SK-N-SH (cell line): ENCODE measurements at regions of chr10 and their contacts with region 1.

Region 1: GRCh38 chr10:101214446-101215396 is 14.5 kb downstream of the LBX1 start:
- DNase-seq: peak; percentile 84
- H3K4me3 ChIP-seq: peak overlapping the region; percentile 19 to 67; a peak in 3 of 4 replicates
- H3K27ac ChIP-seq: no peak overlapping the region
- H3K4me1 ChIP-seq: peaks cover 0 to 35% of the 10 kb centered on the region in 2 experiments; a peak in 2 of 4 replicates
- H3K27me3 ChIP-seq: peaks cover 86% of the 10 kb centered on the region
- CTCF ChIP-seq: peak; percentile 93
- EP300 ChIP-seq: no peak
- RAD21 ChIP-seq: peak; percentile 77

Region 2: DNA sequence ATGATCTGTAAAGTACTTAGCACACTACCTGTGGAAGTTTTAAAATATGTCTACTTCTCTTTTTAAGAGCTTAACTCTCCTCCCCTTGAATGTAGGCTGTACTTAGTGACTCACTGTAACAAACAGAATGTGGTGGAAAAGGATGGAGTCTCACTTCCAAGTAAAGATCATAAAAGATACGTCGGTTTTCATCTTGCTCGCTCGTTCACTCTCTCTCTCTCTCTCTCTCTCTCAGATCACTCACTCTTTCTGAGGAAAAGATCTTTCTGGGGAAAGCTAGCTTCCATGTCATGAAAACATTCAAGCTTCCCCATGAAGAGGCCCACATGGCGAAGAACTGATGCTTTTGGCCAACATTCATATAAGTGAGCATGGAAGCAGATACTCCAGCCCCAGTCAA is 990.8 kb before region 1 on chr10:
- CTCF ChIA-PET with region 1: no interaction called
- POLR2A ChIA-PET with region 1: no interaction called
- DNase-seq: no peak
- H3K4me3 ChIP-seq: no peak overlapping the region
- H3K27ac ChIP-seq: no peak overlapping the region
- H3K4me1 ChIP-seq: peaks cover 3 to 5% of the 10 kb centered on the region in 2 experiments; a peak in 2 of 4 replicates
- H3K27me3 ChIP-seq: no peaks in the 10 kb centered on the region
- CTCF ChIP-seq: no peak
- EP300 ChIP-seq: no peak
- RAD21 ChIP-seq: no peak

Region 3: DNA sequence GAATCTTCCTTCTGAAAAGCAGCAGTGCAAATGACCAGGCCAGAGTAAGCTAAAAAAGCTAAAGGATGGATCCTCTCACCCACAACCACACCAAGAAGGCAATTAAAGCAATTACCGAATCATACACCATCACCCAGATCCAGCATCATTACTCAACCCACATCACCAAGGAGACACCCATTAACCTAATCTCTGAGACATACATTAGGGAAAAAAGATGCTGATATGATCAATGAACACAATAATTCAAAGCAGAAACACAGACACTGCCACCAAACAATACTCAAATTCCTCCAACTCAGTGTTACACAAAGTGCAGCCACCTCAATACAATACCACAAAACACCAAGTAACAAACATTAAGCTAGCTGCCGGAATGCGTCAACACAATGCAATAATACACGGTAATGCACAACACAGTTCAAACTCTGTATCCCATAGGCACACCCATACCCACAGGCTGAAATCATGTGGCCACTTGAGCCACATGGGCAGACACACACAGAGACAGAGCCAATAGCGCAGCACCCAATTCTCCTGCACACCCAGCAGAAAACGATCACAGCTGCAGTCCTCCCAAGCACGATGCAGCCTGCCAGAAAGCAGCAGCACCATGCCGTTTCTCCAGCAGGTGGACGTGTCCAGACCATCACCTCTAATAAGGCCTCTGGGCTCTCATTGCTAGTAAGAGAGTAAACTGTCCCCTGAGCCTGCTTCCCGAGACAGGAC is 447.9 kb before region 1 on chr10:
- CTCF ChIA-PET with region 1: no interaction called
- POLR2A ChIA-PET with region 1: no interaction called
- DNase-seq: peak; percentile 76
- H3K4me3 ChIP-seq: no peak overlapping the region
- H3K27ac ChIP-seq: peak overlapping the region in 1 of 2 experiments; percentile 97; a peak in 2 of 4 replicates
- H3K4me1 ChIP-seq: peaks cover 0 to 35% of the 10 kb centered on the region in 2 experiments; a peak in 2 of 4 replicates
- H3K27me3 ChIP-seq: peaks cover 37% of the 10 kb centered on the region
- CTCF ChIP-seq: no peak
- EP300 ChIP-seq: peak in 1 of 2 experiments; percentile 79; a peak in 2 of 4 replicates
- RAD21 ChIP-seq: peak; percentile 49

Region 4: DNA sequence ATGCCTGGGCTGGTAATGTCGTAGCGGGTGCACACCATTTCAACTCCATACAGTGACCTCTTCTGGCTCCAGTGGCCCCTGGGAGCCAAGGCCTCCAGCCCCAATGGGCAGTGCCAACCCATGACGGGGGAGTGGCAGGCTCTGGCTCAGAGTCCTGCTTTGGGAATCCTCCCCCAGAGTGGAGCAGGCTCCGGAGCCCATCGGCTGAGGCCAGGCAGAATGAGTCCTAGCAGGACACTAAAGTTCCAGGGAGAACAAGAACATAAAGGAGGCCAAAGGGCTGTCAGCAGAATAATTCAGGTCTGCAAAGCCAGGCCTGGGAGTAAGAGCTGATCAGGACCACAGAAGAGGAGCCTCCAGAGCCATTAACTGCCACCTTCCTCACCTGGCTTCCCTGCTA is 18.8 kb before region 1 on chr10:
- CTCF ChIA-PET with region 1: interaction called, 42 read pairs
- POLR2A ChIA-PET with region 1: no interaction called
- DNase-seq: no peak
- H3K4me3 ChIP-seq: no peak overlapping the region
- H3K27ac ChIP-seq: no peak overlapping the region
- H3K4me1 ChIP-seq: no peaks in the 10 kb centered on the region
- H3K27me3 ChIP-seq: peaks cover 28% of the 10 kb centered on the region; the same call in 1 of the 2 replicates
- CTCF ChIP-seq: no peak
- EP300 ChIP-seq: no peak
- RAD21 ChIP-seq: no peak

Region 5: GRCh38 chr10:101291331-101292193 is 76.8 kb after region 1 on chr10:
- CTCF ChIA-PET with region 1: interaction called, 159 read pairs
- POLR2A ChIA-PET with region 1: no interaction called
- DNase-seq: peak; percentile 94
- H3K4me3 ChIP-seq: peak overlapping the region; percentile 57 to 75
- H3K27ac ChIP-seq: peak overlapping the region in 1 of 2 experiments; percentile 92; a peak in 2 of 4 replicates
- H3K4me1 ChIP-seq: peaks cover 0 to 15% of the 10 kb centered on the region in 2 experiments; a peak in 1 of 4 replicates
- H3K27me3 ChIP-seq: peaks cover 16% of the 10 kb centered on the region; the same call in 1 of the 2 replicates
- CTCF ChIP-seq: peak; percentile 62
- EP300 ChIP-seq: no peak
- RAD21 ChIP-seq: peak; percentile 66

Region 6: DNA sequence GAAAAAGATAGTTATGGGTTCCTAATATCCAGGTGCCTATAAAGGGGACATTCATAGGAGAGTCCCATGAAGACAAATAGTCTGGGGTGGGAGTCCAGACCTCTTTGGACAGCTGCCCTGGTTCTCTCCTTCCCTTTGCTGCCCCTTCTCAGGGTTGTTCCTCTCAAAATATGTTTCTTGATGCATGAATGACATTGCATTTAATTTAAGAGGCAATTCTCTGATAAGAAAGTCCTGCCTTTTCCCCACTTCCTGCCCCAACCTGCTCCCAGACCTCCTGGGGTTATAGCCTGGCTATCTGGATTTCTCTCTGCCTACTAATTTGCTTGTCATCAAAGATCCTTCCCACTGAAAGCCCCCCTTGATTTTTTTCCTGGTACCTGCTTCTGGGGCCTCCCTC is 126.7 kb after region 1 on chr10:
- CTCF ChIA-PET with region 1: no interaction called
- POLR2A ChIA-PET with region 1: no interaction called
- DNase-seq: no peak
- H3K4me3 ChIP-seq: no peak overlapping the region
- H3K27ac ChIP-seq: no peak overlapping the region
- H3K4me1 ChIP-seq: no peaks in the 10 kb centered on the region
- H3K27me3 ChIP-seq: no peaks in the 10 kb centered on the region
- CTCF ChIP-seq: no peak
- EP300 ChIP-seq: no peak
- RAD21 ChIP-seq: no peak

Region 7: GRCh38 chr10:101467286-101467770 is 252.6 kb after region 1 on chr10:
- CTCF ChIA-PET with region 1: interaction called, 78 read pairs
- POLR2A ChIA-PET with region 1: no interaction called
- DNase-seq: peak; percentile 52
- H3K4me3 ChIP-seq: no peak overlapping the region; a peak in 1 of 4 replicates
- H3K27ac ChIP-seq: no peak overlapping the region; a peak in 1 of 4 replicates
- H3K4me1 ChIP-seq: peaks cover 0 to 13% of the 10 kb centered on the region in 2 experiments; a peak in 2 of 4 replicates
- H3K27me3 ChIP-seq: no peaks in the 10 kb centered on the region
- CTCF ChIP-seq: peak; percentile 91
- EP300 ChIP-seq: no peak
- RAD21 ChIP-seq: peak; percentile 80

Region 8: DNA sequence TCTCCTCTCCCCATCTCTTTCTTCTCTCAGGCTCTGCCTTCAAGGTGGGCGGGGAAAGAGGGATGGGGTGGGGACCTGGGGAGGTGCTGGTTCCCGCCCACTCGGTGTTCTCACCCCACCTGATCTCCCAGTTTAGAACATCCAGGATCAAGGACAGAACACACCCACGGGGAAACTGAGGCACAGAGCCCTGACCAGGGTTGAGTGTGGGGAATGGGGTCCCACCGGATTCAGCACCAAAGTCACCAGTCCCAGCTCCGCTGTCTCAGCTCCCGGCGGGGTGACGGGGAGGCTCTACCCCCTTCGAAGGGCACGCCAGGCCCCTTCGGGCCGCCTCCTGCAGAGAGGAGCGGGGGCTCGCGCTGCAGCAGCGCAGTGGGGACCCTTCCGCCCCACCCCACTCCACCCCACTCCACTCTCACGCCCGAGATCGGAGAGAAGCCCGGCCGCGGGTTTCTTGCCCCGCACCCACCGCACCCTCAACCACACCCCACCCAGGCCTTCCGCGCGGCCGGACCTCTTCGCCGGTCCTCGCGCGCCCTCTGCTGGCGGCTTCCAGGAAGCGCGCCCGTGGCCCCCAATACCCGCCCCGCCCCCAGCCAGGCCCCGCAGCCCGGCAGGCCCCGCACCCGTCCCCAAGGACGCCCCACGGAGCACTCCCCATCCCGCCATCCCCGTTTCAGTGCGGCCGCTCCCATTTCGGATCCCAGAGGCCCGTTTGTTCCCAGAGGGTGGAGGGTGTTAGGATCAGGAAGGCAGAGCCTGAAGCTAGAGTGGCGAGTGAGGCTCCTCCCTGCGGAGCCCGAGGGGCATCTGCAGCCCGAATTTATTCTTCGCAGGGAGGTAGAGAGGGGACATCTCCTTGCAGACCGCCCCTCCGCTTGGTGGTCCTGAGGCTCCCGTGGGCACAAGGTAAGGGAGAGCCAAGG is 355.4 kb after region 1 on chr10:
- CTCF ChIA-PET with region 1: interaction called, 164 read pairs
- POLR2A ChIA-PET with region 1: interaction called, 7 read pairs
- DNase-seq: peak; percentile 98
- H3K4me3 ChIP-seq: peak overlapping the region; percentile 66 to 70
- H3K27ac ChIP-seq: peak overlapping the region in 1 of 2 experiments; percentile 56; a peak in 1 of 4 replicates
- H3K4me1 ChIP-seq: peaks cover 0 to 29% of the 10 kb centered on the region in 2 experiments; a peak in 1 of 4 replicates
- H3K27me3 ChIP-seq: no peaks in the 10 kb centered on the region; the same call in 1 of the 2 replicates
- CTCF ChIP-seq: peak; percentile 69
- EP300 ChIP-seq: no peak
- RAD21 ChIP-seq: peak; percentile 76

Region 9: DNA sequence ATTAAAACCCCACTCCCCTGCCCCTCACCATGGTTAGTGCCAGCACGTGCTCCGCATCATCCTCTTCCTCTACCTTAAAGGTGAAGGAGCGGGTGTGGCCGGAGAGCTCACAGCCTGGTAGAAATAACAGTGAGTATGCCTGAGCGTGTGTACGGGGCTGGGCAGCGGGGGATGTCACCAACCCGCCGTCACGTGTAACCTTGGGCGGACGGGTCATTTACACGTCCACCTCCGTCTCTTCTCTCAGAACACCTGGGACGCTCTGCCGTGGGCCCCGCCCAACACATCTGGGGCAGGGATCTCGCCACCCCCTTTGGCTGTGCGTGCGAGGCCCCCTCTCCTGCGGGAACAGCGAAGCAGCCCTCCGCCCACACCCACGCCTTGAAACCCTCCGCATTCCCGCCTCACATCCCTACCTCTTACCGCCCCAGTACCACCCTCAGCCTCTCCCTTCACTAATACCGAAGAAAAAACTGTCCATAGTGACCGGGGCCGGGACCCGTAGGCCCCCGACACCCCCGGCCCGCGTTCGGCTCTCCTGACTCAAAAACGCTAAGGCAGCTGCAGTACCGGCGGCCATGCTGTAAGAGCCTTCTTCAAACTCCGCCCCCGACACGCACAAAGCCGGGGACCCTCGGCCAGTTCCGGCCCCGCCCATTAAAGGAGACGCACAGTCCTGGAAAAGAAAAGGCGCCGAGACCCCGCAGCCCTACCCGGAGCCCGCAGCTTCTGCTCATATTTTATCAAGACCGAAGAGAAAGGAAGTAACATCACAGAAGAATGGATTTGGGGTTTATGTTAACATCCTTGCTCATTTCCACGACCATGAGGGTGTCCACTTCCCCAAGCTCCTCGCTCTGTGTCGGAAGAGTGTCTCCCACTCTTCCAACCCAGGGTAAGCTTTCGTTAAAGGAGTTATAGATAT is 568.4 kb after region 1 on chr10 and contains the start of gene NPM3:
- CTCF ChIA-PET with region 1: interaction called, 80 read pairs
- POLR2A ChIA-PET with region 1: no interaction called
- DNase-seq: peak; percentile 94
- H3K4me3 ChIP-seq: peak within 1 kb of the TSS; percentile 77 to 96
- H3K27ac ChIP-seq: peak within 1 kb of the TSS; percentile 70 to 72
- H3K4me1 ChIP-seq: peaks cover 8 to 23% of the 10 kb centered on the region in 2 experiments; a peak in 3 of 4 replicates
- H3K27me3 ChIP-seq: no peaks in the 10 kb centered on the region
- CTCF ChIP-seq: no peak
- EP300 ChIP-seq: no peak
- RAD21 ChIP-seq: no peak
- polyA plus RNA-seq, gene NPM3: 89.3 and 105 TPM in 2 replicates